GM12878 (cell line): ENCODE measurements at regions of chr2 and their contacts with region 1.

Region 1: GRCh38 chr2:64052468-64053241 is 33.4 kb upstream of the VPS54 start:
- DNase-seq: no peak
- ATAC-seq: no peak
- H3K4me3 ChIP-seq: no peak overlapping the region
- H3K27ac ChIP-seq: no peak overlapping the region
- H3K4me1 ChIP-seq: peaks cover 25% of the 10 kb centered on the region
- H3K27me3 ChIP-seq: no peaks in the 10 kb centered on the region
- CTCF ChIP-seq: no peak
- EP300 ChIP-seq: no peak
- POLR2A ChIP-seq: no peak
- RAD21 ChIP-seq: no peak

Region 2: GRCh38 chr2:64092502-64092901 is 39.8 kb after region 1 on chr2:
- CTCF ChIA-PET with region 1: interaction called, 7 read pairs
- POLR2A ChIA-PET with region 1: no interaction called
- RAD21 ChIA-PET with region 1: interaction called, 8 read pairs
- SMC1A ChIA-PET with region 1: interaction called, 5 read pairs
- in situ Hi-C with region 1: no loop called
- intact Hi-C with region 1: loop called (anchors 5 kb)
- DNase-seq: peak; percentile 68
- ATAC-seq: peak; percentile 79
- H3K4me3 ChIP-seq: peak overlapping the region; percentile 18; the same call in 1 of the 2 replicates
- H3K27ac ChIP-seq: peak overlapping the region; percentile 64
- H3K4me1 ChIP-seq: peaks cover 28% of the 10 kb centered on the region
- H3K27me3 ChIP-seq: no peaks in the 10 kb centered on the region
- CTCF ChIP-seq: no peak
- EP300 ChIP-seq: peak; percentile 55 to 82; a peak in 3 of 4 replicates
- POLR2A ChIP-seq: no peak
- RAD21 ChIP-seq: no peak

Region 3: DNA sequence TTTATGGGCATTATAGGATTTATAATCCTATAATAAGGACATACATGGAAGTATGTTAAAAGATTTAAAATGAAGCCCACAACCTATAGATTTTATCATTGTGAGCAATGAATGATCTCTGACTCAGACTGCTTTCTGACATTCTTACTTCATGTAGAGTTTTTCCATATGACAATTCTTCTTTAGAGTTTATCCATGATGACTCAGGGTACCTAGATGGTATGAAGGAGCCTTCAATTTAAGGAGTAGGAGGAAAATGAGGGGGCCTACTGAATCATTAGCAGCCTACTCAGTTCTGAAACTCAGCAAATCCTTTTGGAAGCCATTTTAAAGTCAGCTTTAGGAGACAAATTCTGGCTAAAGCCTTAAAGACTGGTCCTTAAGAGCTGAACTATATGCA is 81.2 kb after region 1 on chr2:
- CTCF ChIA-PET with region 1: interaction called, 19 read pairs
- POLR2A ChIA-PET with region 1: interaction called, 3 read pairs
- RAD21 ChIA-PET with region 1: interaction called, 5 read pairs
- SMC1A ChIA-PET with region 1: interaction called, 6 read pairs
- in situ Hi-C with region 1: no loop called
- intact Hi-C with region 1: no loop called
- DNase-seq: no peak
- ATAC-seq: no peak
- H3K4me3 ChIP-seq: no peak overlapping the region
- H3K27ac ChIP-seq: no peak overlapping the region; the same call in 1 of the 2 replicates
- H3K4me1 ChIP-seq: peaks cover 46% of the 10 kb centered on the region
- H3K27me3 ChIP-seq: no peaks in the 10 kb centered on the region
- CTCF ChIP-seq: no peak
- EP300 ChIP-seq: no peak
- POLR2A ChIP-seq: no peak
- RAD21 ChIP-seq: no peak

Region 4: DNA sequence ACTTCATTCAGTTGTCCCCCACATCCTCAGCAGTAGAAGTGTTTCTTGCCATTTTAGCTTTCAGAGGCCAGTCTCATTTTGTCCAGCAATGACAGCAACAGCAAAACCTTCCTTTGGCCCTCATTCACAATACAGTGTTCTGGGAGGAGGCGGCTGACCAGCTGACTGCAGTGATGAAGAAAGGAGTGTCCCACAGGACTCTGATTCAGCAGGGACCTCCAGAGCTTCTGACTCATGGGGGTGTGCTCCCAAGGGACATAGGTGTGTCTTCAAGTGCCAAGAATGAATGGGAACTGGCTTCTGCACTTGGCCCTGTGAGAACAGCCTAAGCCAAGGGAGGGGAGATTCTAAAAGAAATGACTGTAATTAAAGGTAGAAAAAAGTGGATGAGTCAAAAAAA is 238.5 kb after region 1 on chr2:
- CTCF ChIA-PET with region 1: interaction called, 11 read pairs
- POLR2A ChIA-PET with region 1: interaction called, 3 read pairs
- RAD21 ChIA-PET with region 1: interaction called, 10 read pairs
- SMC1A ChIA-PET with region 1: interaction called, 6 read pairs
- in situ Hi-C with region 1: no loop called
- intact Hi-C with region 1: no loop called
- DNase-seq: no peak
- ATAC-seq: no peak
- H3K4me3 ChIP-seq: no peak overlapping the region
- H3K27ac ChIP-seq: no peak overlapping the region
- H3K4me1 ChIP-seq: peaks cover 12% of the 10 kb centered on the region
- H3K27me3 ChIP-seq: no peaks in the 10 kb centered on the region
- CTCF ChIP-seq: no peak
- EP300 ChIP-seq: no peak
- POLR2A ChIP-seq: no peak
- RAD21 ChIP-seq: no peak

Region 5: GRCh38 chr2:64311948-64312621 is 259.4 kb after region 1 on chr2:
- CTCF ChIA-PET with region 1: interaction called, 49 read pairs
- POLR2A ChIA-PET with region 1: interaction called, 3 read pairs
- RAD21 ChIA-PET with region 1: interaction called, 82 read pairs
- SMC1A ChIA-PET with region 1: interaction called, 54 read pairs
- in situ Hi-C with region 1: no loop called
- intact Hi-C with region 1: no loop called
- DNase-seq: no peak
- ATAC-seq: peak; percentile 80
- H3K4me3 ChIP-seq: no peak overlapping the region
- H3K27ac ChIP-seq: no peak overlapping the region
- H3K4me1 ChIP-seq: no peaks in the 10 kb centered on the region
- H3K27me3 ChIP-seq: no peaks in the 10 kb centered on the region
- CTCF ChIP-seq: peak in 2 of 3 experiments; percentile 38 to 55; a peak in 3 of 6 replicates
- EP300 ChIP-seq: no peak
- POLR2A ChIP-seq: no peak
- RAD21 ChIP-seq: no peak

Region 6: DNA sequence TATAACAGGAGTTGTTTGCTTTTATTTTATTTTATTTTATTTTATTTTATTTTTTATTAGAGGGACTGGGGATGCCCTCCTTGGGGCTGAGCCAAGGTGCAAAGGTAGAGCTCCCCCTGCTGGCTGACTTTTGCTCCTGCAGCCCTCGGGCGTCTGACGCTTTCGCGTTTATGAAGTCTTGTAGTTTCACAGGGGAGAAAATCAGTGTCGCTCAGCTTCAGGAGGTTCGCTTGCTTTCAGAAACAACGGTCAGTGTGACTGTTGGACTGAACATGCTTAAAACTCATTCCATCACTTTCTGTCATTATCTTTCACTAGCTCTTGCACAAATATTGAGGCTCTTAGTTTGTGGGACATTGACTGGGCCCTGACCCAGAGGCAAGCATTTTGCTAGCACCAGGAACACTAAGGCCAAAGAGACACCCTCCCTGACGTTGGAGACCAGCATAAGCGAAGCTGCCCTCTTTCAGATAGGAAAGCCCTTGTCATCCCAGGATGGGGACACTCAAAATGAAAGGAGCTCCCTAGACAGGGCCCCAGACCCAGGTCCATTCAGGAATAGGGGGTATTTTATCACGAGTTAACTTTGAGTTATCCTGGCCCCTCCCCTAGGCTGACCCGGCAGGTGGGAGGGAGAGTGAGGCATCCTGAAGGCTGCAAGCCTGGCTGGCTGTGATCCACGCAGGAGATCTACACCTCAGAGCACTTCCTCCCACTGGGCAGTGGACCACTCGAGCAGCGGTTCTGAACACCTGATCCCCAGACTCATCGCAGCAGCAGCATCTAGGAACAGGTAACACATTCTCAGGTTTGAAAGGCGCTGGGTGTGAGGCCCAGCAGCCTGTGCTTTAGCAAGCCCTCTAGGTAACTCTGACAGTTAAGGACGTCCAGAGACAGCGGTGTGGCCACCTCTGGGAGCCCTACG is 435.7 kb after region 1 on chr2:
- CTCF ChIA-PET with region 1: interaction called, 44 read pairs
- POLR2A ChIA-PET with region 1: no interaction called
- RAD21 ChIA-PET with region 1: interaction called, 19 read pairs
- SMC1A ChIA-PET with region 1: interaction called, 14 read pairs
- in situ Hi-C with region 1: loop called (anchors 5 kb)
- intact Hi-C with region 1: loop called (anchors 1 kb)
- DNase-seq: peak; percentile 12
- ATAC-seq: peak; percentile 94
- H3K4me3 ChIP-seq: no peak overlapping the region
- H3K27ac ChIP-seq: no peak overlapping the region
- H3K4me1 ChIP-seq: peaks cover 5% of the 10 kb centered on the region
- H3K27me3 ChIP-seq: no peaks in the 10 kb centered on the region
- CTCF ChIP-seq: peak; percentile 84 to 92 (median 91)
- EP300 ChIP-seq: no peak
- POLR2A ChIP-seq: no peak
- RAD21 ChIP-seq: peak; percentile 90